A549 (cell line): ENCODE measurements at regions of chr11 and their contacts with region 1.

Region 1: DNA sequence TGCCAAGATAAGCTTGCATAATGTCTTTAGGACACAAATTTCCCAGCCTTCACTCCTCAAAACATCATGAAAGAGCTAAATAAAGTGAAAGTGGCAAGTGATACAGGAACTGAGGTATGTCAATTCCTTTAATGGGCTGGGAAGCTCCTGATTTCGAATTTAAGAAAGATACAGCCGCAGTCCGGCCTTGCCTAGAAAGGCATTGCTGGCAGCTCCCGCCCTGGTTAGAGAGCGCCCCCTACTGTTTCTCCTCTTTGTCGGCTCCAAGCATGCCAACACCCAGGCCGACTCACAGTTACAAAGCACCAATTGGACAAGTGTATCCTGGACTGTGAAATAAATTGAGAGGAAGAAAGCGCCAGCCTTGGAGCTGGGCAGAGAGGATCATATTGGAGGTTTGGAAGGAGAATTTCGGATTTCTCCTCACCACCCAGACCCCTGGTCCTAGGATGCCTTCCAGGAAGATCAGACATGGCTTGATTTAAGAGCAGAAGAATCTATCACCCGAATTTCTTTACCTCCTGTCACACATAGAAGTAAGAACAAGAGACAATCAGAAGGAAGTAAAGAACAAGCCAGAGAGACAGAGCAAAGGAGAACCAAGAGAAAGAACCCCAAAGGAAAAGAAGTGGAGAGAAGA is 84.0 kb downstream of the FAM76B start:
- DNase-seq: peak; percentile 28 to 78
- ATAC-seq: peak; percentile 97 to 99
- H3K4me3 ChIP-seq: no peak overlapping the region
- H3K27ac ChIP-seq: no peak overlapping the region
- H3K4me1 ChIP-seq: no peaks in the 10 kb centered on the region
- CTCF ChIP-seq: peak; percentile 67
- EP300 ChIP-seq: no peak
- POLR2A ChIP-seq: no peak
- RAD21 ChIP-seq: peak; percentile 87 to 89

Region 2: GRCh38 chr11:95625164-95625900 is 80.3 kb before region 1 on chr11:
- CTCF ChIA-PET with region 1: no interaction called
- POLR2A ChIA-PET with region 1: no interaction called
- DNase-seq: no peak
- ATAC-seq: no peak
- H3K4me3 ChIP-seq: no peak overlapping the region
- H3K27ac ChIP-seq: no peak overlapping the region
- H3K4me1 ChIP-seq: no peaks in the 10 kb centered on the region
- CTCF ChIP-seq: no peak
- EP300 ChIP-seq: no peak
- POLR2A ChIP-seq: no peak
- RAD21 ChIP-seq: no peak

Region 3: DNA sequence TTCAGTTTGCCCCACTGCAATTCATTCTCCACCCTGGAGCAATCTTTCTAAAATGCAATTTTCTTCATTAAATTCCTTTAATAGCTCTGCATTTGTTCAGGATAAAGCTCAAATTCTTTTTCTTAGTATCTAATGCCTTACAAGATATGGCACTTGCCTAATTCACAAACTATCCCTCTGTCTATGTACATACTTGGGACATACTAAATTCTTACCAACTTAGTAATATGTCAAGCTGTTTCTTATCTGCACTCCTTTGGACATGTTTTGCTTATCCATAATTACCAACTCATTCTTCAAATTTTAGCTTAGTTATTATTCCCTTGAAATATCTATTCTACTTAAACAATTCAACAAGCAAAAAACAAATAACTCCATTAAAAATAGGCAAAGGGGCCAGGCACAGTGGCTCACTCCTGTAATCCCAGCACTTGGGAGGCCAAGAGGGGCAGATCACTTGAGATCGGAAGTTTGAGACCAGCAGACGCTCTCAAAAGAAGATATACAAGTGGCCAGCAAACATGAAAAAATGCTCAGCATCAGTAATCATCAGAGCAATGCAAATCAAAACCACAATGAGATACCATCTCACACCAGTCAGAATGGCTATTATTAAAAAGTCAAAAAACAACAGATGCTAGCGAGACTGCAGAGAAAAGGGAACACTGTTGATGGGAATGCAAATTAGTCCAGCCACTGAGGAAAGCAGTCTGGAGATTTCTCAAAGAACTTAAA is 12.9 kb before region 1 on chr11:
- CTCF ChIA-PET with region 1: interaction called, 34 read pairs
- POLR2A ChIA-PET with region 1: interaction called, 3 read pairs
- DNase-seq: no peak
- ATAC-seq: no peak
- H3K4me3 ChIP-seq: no peak overlapping the region
- H3K27ac ChIP-seq: no peak overlapping the region
- H3K4me1 ChIP-seq: no peaks in the 10 kb centered on the region
- CTCF ChIP-seq: no peak
- EP300 ChIP-seq: no peak
- POLR2A ChIP-seq: no peak
- RAD21 ChIP-seq: no peak

Region 4: GRCh38 chr11:95715777-95716241 is 10.2 kb after region 1 on chr11:
- CTCF ChIA-PET with region 1: interaction called, 10 read pairs
- POLR2A ChIA-PET with region 1: no interaction called
- DNase-seq: no peak
- ATAC-seq: no peak
- H3K4me3 ChIP-seq: no peak overlapping the region
- H3K27ac ChIP-seq: no peak overlapping the region
- H3K4me1 ChIP-seq: no peaks in the 10 kb centered on the region
- CTCF ChIP-seq: no peak
- EP300 ChIP-seq: no peak
- POLR2A ChIP-seq: no peak
- RAD21 ChIP-seq: no peak